Posterior vena cava (tissue), 2 donors: ENCODE measurements at regions of chr5 and their contacts with region 1.

Region 1: GRCh38 chr5:3684771-3685354 is 89.2 kb downstream of the IRX1 start:
- DNase-seq: no peak

Region 2: GRCh38 chr5:3729631-3730030 is 44.8 kb after region 1 on chr5:
- intact Hi-C with region 1: loop called in 1 of 2 experiments (anchors 1 kb)
- DNase-seq: no peak